Aorta (tissue), 5 donors: ENCODE measurements at regions of chr16 and their contacts with region 1.

Region 1: DNA sequence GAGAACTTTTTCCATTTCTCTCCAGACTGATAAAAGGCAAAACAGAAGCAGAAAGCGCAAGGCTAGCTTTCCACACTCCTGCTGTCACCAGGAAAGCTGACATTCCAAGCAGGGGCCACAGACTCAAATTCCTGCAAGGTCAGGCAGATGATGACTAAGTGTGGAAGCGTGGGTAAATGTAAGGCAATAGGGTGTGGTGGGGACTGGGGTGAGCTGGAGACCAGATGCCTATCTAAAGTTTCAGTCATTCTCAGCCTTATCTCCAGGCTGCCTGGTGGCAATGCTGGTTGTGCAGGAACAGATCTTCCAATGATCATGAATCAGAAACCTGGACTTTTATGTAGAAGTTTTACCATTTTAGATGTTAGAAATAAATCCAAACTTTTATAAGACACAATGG is 224.1 kb downstream of the GSG1L start:
- DNase-seq: peak in 1 of 2 donors; percentile 9
- ATAC-seq: no peak
- H3K4me3 ChIP-seq: no peak overlapping the region
- H3K27ac ChIP-seq: no peak overlapping the region
- H3K4me1 ChIP-seq: no peaks in the 10 kb centered on the region
- H3K27me3 ChIP-seq: no peaks in the 10 kb centered on the region

Region 2: DNA sequence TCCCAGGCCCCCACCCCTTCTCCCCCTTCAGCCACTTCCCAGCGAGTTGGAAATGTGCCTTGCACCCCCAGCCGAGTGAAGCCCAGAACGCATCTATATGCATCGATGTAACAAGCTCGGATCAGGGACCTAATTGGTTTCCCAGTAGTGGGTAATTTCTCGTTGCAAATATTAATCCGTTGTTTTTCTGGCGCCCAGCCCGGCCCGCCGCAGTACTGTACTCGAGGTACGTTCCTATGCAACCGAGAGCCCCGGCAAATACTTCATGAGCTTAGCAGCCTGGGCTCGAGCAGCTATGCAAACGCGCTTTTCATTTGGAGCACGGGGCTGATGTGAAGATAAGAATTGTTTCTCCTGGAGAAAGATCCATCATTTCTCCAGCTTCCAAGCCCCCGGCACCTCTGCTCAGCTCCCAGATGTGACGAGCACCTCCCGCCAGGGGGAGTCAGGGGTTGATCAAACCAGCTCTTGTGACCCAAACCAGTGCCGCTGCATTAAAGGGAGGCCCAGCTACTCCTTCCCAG is 59.7 kb before region 1 on chr16:
- intact Hi-C with region 1: loop called in 1 of 2 experiments (anchors 10 kb)
- DNase-seq: peak in 1 of 2 donors; percentile 81
- ATAC-seq: no peak
- H3K4me3 ChIP-seq: no peak overlapping the region
- H3K27ac ChIP-seq: no peak overlapping the region
- H3K4me1 ChIP-seq: no peaks in the 10 kb centered on the region
- H3K27me3 ChIP-seq: no peaks in the 10 kb centered on the region